OCI-LY7 (cell line): ENCODE measurements at regions of chr1 and their contacts with region 1.

Region 1: DNA sequence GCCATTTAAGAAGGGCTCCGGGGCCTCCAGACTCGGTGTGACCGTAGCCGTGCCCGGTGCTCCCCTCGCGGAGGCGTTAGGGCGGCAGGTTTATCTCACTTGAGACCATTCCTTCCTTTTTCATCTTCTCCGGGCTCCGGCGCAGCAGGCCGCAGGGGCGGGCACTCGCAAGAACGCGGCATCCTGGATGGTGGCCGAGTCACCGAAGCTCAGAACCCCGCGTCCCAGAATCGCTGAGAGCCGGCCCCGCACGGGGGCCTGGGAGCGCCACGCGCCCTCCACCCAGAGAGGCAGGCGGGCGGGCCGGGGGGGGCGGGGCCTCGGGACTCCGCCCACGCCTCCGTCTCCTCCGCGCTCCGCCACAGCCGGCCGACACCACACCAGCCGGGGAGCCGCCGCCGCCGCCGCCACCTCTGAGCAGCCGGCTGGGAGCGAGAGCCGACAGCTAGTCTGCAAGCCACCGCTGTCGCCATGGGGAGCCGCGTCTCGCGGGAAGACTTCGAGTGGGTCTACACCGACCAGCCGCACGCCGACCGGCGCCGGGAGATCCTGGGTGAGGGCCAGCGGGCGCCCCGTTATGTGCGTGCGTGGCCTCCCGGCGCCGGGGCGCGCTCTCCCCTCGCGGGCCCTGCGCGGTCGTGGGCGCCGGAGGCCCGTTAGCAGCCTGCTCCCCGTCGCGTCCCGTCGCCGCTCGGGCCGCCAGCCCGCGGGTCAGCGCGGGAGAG is at the start of gene DEGS1:
- DNase-seq: peak; percentile 92
- H3K4me3 ChIP-seq: peak within 1 kb of the TSS; percentile 75
- H3K27ac ChIP-seq: peak within 1 kb of the TSS; percentile 96
- H3K4me1 ChIP-seq: peaks cover 41% of the 10 kb centered on the region
- CTCF ChIP-seq: no peak
- total RNA-seq, gene DEGS1: 28.7 and 34.8 TPM in 2 replicates

Region 2: GRCh38 chr1:224113918-224114786 is 68.9 kb before region 1 on chr1 and contains the start of gene FBXO28:
- CTCF ChIA-PET with region 1: interaction called, 3 read pairs
- POLR2A ChIA-PET with region 1: interaction called, 8 read pairs
- intact Hi-C with region 1: loop called (anchors 2 kb)
- DNase-seq: peak; percentile 95
- H3K4me3 ChIP-seq: peak within 1 kb of the TSS; percentile 78
- H3K27ac ChIP-seq: peak within 1 kb of the TSS; percentile 74
- H3K4me1 ChIP-seq: peaks cover 25% of the 10 kb centered on the region
- CTCF ChIP-seq: no peak
- total RNA-seq, gene FBXO28: 23.3 and 25.1 TPM in 2 replicates

Region 3: GRCh38 chr1:224124220-224124619 is 58.8 kb before region 1 on chr1:
- CTCF ChIA-PET with region 1: no interaction called
- POLR2A ChIA-PET with region 1: no interaction called
- intact Hi-C with region 1: no loop called
- DNase-seq: no peak
- H3K4me3 ChIP-seq: no peak overlapping the region
- H3K27ac ChIP-seq: no peak overlapping the region
- H3K4me1 ChIP-seq: no peaks in the 10 kb centered on the region
- CTCF ChIP-seq: no peak

Region 4: DNA sequence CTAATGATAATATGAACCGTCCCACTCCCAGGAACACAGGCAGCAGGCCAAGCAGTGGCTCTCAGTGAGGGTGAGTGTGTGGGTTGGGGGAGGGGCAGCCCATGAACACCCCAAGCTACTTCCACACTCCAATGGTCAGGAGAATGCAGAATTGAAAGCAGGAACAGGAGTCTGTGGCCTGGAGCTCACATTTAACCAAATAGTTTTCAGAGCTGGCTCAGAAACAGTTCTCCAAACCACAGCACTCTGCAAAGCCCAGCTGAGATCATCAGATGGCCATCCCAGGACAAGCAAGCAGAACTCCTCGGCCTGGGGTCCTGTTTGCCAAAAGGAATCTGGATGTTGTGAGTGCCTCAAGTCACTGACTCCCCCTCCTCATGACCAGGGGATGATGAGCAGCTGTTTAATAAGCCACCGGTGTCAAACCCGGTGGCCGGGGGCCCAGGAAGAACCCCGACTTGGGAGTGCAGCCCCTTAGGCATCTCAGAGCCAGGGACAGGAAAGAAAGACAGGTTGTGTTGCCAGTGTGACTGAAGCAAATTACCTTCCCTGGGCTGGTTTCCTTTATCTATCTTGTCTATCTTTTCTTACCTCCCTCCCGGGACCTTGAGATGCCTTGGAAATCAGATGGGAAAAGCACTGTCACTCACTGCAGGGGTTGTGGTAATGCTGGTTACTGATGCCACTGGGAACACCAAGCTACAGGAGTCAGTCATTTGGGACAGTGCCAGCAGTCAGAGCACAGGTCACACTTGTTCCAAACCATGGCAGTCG is 20.4 kb after region 1 on chr1:
- CTCF ChIA-PET with region 1: interaction called, 4 read pairs
- POLR2A ChIA-PET with region 1: interaction called, 10 read pairs
- intact Hi-C with region 1: no loop called
- DNase-seq: peak; percentile 73
- H3K4me3 ChIP-seq: peak overlapping the region; percentile 2
- H3K27ac ChIP-seq: peak overlapping the region; percentile 41
- H3K4me1 ChIP-seq: peaks cover 29% of the 10 kb centered on the region
- CTCF ChIP-seq: no peak

Region 5: DNA sequence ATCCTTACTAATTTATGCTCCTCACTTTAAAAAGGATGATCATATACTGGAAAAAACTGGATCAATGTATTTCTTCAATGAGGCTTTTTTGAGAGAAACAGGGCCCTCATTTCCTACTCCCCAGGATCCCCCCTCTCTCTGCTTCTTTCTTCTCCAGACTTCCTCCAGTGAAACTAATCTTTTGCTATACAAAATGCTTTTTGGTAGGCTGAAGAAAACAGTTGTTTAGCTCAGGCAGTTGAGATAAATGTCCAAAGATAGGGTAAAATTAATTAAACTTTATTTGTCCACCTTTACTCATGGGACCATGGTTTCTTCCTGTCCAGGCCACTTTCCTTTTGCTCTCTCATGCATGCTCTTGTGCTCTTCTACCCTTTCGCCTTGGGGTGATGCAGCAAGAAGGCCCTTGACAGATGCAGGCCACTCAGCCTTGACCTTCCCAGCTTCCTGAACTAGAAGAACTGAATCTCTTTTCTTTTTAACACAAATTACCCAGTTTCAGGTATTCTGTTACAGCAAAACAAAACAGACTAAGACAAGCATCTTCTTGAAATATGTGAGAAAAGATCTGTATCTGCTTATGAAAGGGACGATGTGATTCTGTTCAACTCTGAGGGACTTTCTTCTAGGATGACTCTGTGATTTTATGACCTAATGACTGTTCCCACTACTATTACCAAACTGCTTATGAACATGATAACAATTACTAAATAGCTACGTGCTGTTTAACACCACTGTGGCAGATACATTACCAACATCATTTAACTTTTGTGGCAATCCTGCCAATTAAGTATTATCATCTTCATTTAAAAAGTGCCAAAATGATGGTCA is 83.3 kb after region 1 on chr1:
- CTCF ChIA-PET with region 1: no interaction called
- POLR2A ChIA-PET with region 1: no interaction called
- intact Hi-C with region 1: loop called (anchors 5 kb)
- DNase-seq: peak; percentile 51
- H3K4me3 ChIP-seq: no peak overlapping the region
- H3K27ac ChIP-seq: peak overlapping the region; percentile 4
- H3K4me1 ChIP-seq: peaks cover 14% of the 10 kb centered on the region
- CTCF ChIP-seq: no peak

Region 6: DNA sequence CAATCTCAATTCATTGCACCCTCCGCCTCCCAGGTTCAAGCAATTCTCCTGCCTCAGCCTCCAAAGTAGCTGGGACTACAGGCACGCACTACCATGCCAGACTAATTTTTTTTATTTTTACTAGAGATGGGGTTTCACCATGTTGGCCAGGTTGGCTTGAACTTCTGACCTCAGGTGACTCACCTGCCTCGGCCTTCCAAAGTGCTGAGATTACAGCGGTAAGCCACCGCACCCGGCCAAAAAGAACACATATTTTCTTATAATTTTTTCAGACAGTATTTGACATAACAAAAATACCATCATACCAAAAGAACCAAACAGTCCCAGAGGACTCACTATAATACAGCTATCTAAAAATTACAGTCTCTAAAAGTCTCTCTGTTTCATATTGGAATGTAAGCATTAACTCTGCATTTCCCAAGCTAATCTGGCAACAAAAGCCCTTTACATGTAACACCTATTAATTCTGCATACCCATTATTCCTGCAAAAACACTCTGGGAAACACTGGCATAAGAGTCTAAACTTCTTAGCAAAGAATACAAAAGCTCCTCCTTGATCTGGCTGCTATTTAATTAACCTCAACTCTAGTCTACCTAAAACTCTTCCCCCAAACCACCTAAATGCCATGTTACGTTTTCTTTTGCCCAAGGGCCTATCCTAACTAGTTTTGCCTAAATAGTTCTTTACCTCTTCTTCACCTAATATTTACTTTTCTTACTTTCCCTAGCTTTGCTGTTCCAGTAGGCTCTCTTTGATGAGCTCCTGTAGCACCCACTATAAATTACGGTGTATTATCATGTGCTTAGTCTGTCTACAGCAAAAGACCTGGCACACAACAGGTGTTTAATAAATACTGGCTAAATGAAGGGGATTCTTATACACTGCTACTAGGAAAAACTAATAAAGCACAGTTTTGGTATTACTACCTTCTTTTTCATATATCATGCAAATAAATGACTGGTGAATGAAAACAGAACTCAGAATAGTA is 224.8 kb after region 1 on chr1:
- CTCF ChIA-PET with region 1: no interaction called
- POLR2A ChIA-PET with region 1: no interaction called
- intact Hi-C with region 1: no loop called
- DNase-seq: no peak
- H3K4me3 ChIP-seq: no peak overlapping the region
- H3K27ac ChIP-seq: no peak overlapping the region
- H3K4me1 ChIP-seq: no peaks in the 10 kb centered on the region
- CTCF ChIP-seq: no peak

Region 7: DNA sequence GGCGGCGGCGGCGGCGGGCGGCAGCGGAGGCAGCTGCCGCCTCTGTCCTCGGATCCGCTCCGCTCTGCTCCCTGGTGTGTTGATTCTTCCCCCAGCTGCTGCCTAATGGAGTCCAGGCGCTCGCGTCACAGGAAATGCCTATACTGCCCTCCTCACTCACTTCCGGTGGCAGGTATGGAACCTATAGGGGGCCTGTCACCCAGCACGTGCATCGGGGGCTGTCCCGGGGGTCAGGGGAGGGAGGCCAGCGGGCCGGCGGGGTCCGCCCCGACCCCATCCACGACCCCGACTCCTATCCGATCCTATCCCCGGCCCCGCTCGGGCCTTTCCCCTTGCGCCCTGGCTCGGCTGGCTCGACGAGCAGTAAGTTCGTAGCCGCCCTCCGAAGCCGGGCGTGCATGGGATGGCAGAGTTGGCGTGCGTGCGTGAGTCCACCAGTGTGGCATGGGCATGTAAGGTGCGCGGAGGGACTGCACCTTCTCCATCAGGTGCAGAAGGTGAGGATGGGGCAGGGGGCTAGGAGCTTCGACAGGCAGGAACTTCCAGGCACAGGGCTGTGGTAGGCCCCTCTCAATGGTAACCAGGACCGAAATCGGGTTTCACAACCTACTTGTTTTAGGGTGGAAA is 251.8 kb after region 1 on chr1 and contains the start of gene WDR26:
- CTCF ChIA-PET with region 1: no interaction called
- POLR2A ChIA-PET with region 1: no interaction called
- intact Hi-C with region 1: loop called (anchors 5 kb)
- DNase-seq: peak; percentile 93
- H3K4me3 ChIP-seq: peak within 1 kb of the TSS; percentile 75
- H3K27ac ChIP-seq: peak within 1 kb of the TSS; percentile 44
- H3K4me1 ChIP-seq: peaks cover 51% of the 10 kb centered on the region
- CTCF ChIP-seq: no peak; the same call in 1 of the 2 replicates
- total RNA-seq, gene WDR26: 31.3 and 32.0 TPM in 2 replicates